ENCODE measurements at regions of chrX and their contacts with region 1.

Region 1: GRCh38 chrX:68511255-68511654 is 12.4 kb downstream of the YIPF6 start:
- DNase-seq: no peak
- H3K4me3 Mint-ChIP-seq: no peak overlapping the region
- H3K27ac Mint-ChIP-seq: no peak overlapping the region
- H3K4me1 Mint-ChIP-seq: peaks cover 12% of the 10 kb centered on the region
- H3K27me3 Mint-ChIP-seq: no peaks in the 10 kb centered on the region

Region 2: GRCh38 chrX:68710870-68711576 is 199.8 kb after region 1 on chrX:
- intact Hi-C with region 1: loop called (anchors 1 kb)
- DNase-seq: no peak
- H3K4me3 Mint-ChIP-seq: no peak overlapping the region
- H3K27ac Mint-ChIP-seq: no peak overlapping the region
- H3K4me1 Mint-ChIP-seq: no peaks in the 10 kb centered on the region
- H3K27me3 Mint-ChIP-seq: no peaks in the 10 kb centered on the region

Region 3: DNA sequence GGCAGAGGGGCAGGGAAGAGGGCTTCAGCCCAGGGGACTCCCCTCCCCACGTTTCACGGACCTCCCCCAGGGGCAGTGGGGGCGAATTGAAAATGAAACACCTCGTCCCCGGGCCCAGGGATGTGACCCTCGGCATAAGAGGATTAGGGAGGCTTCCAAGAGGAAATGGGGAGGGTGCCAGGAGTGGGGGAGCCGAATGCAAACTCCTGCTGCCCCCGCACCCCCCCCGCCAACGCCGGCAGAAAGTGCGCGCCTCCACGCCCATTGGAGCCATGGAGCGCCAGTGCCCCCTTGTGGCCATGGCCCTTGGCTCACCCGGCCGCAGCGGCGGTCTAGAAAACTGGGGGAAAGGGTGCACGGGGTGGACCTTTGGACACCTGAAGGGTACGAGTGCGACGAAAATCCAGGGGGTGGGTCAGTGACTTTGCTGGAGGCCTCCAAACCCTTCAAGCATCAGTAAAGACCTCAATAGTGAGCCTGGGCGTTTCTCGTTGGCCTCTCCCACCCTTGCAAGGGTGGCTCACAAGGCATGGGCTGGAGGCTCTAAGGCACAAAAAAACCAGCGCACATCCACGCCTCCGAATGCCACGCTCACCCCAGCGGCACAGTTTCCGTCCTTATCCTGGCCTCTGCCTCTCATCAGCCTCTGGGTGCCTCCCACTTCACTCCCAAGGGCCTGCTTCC is 774.8 kb after region 1 on chrX:
- intact Hi-C with region 1: loop called (anchors 5 kb)
- DNase-seq: peak; percentile 30
- H3K4me3 Mint-ChIP-seq: no peak overlapping the region
- H3K27ac Mint-ChIP-seq: no peak overlapping the region
- H3K4me1 Mint-ChIP-seq: no peaks in the 10 kb centered on the region
- H3K27me3 Mint-ChIP-seq: no peaks in the 10 kb centered on the region

Measured in activated T-helper 1 cell treated with anti-CD3 and anti-CD28 coated beads, Interleukin-12 subunit alpha, Interleukin-12 subunit beta, Interleukin-2, Interleukin-4 antibody, amounts not matched to agents 30 ng/mL and 10 ng/mL and 1 ng/mL, durations not matched to agents 14 hours and 24 hours and 36 hours (primary cell).